ENCODE measurements at regions of chr2 and their contacts with region 1.

Region 1: DNA sequence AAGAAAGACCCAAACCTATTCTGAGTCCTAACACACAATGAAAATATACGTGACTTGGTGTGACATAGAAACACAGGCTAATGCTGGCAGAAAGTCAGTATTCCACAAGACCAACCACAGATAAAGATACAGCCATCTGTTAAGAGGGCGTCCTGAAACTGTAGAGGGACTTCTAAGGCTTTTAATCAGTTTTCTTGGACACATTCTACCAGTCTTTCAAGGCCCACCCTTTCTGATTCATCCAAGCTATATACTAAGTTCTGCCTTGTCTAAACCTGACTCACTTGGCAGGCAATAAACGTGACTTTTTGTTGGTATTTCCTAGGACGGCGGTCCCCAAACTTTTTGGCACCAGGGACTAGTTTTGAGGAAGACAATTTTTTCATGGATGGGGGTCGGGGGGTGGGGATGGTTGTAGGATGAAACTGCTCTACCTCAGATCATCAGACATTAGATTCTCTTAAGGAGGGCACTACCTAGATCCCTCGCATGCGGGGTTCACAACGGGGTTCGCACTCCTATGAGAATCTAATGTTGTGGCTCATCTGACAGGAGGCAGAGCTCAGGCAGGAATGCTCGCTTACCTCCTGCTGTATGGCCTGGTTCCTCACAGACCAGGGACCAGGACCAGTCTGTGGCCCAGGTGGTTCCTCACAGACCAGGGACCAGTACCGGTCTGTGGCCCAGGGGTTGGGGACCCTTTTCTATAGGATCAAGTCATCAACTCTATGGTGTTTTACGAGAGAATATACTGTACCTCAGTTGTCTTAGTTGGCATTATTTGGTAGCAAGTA is 61.4 kb downstream of the SP3 start:
- DNase-seq: no peak
- H3K4me3 ChIP-seq: no peak overlapping the region
- H3K27ac ChIP-seq: no peak overlapping the region
- H3K4me1 ChIP-seq: peaks cover 2 to 11% (median 4%) of the 10 kb centered on the region in 6 donors
- H3K27me3 ChIP-seq: no peaks in the 10 kb centered on the region
- CTCF ChIP-seq: no peak
- POLR2A ChIP-seq: no peak

Region 2: GRCh38 chr2:173955004-173955403 is 51.2 kb after region 1 on chr2:
- intact Hi-C with region 1: loop called (anchors 10 kb)
- DNase-seq: no peak
- H3K4me3 ChIP-seq: peak overlapping the region in 1 of 8 donors; percentile 13
- H3K27ac ChIP-seq: peak overlapping the region in 5 of 8 donors; percentile 32 to 68 (median 55)
- H3K4me1 ChIP-seq: peaks cover 56 to 100% (median 99%) of the 10 kb centered on the region in 6 donors
- H3K27me3 ChIP-seq: no peaks in the 10 kb centered on the region
- CTCF ChIP-seq: no peak
- POLR2A ChIP-seq: no peak

Measured in spleen (tissue), 13 donors.